Gastrocnemius medialis (tissue), 4 donors: ENCODE measurements at regions of chr4 and their contacts with region 1.

Region 1: DNA sequence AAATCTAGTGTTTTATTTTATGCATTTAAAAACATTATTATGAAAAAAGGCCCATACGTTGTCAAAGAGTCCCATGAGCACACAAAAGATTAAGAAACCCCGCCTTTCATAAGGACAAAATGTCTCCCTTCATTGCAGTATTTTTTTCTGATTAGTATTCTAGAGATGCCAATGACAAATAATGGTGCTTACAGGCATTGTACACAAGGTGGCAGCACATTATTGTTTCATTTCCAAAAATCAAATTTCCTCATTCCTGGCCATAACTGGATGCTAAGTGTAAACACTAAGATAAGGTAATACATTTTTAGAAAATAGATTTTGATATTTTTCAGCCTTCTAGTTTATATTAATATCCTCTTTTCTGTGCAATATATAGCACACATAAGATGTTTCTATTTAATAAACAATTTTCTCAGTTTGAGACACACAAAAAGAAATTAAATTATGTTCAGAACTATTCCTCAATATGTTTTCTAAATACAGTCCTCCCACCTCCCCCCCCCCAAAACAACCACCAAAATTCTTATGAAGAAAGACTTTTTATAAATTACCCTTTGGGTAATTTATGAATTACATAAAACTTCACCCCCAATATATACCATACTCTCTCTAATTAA is 47.7 kb downstream of the TIGD2 start:
- DNase-seq: no peak
- ATAC-seq: peak; percentile 33 to 36
- H3K4me3 ChIP-seq: no peak overlapping the region
- H3K27ac ChIP-seq: no peak overlapping the region
- H3K4me1 ChIP-seq: no peaks in the 10 kb centered on the region
- H3K27me3 ChIP-seq: no peaks in the 10 kb centered on the region
- CTCF ChIP-seq: peak; percentile 20 to 65 (median 34)
- POLR2A ChIP-seq: no peak

Region 2: GRCh38 chr4:88828842-88829571 is 330.0 kb before region 1 on chr4:
- in situ Hi-C with region 1: no loop called
- intact Hi-C with region 1: no loop called
- DNase-seq: no peak
- ATAC-seq: peak; percentile 53 to 57
- H3K4me3 ChIP-seq: no peak overlapping the region
- H3K27ac ChIP-seq: peak overlapping the region in 2 of 4 donors; percentile 37 to 50
- H3K4me1 ChIP-seq: peaks cover 3 to 6% of the 10 kb centered on the region in 2 donors
- H3K27me3 ChIP-seq: no peaks in the 10 kb centered on the region
- CTCF ChIP-seq: no peak
- POLR2A ChIP-seq: no peak

Region 3: DNA sequence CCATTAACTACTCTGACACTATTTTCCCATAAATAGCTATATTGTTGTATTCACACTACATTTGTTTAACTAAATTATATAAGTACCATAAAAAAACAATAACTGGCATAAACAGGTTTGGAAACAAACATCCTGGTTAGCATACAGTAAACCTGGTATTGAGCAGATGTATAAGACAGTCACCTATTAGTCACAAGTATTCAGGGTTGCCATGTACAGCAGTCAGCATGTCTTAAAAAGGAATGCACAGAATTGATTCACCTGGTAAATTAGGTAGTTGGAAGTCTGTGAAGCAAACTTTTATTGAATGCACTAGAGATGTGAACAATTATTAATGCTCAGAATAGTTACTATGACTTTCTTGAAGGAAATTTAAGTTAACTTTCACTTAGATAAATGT is 239.9 kb before region 1 on chr4:
- in situ Hi-C with region 1: no loop called
- intact Hi-C with region 1: no loop called
- DNase-seq: no peak
- ATAC-seq: no peak
- H3K4me3 ChIP-seq: no peak overlapping the region
- H3K27ac ChIP-seq: no peak overlapping the region
- H3K4me1 ChIP-seq: no peaks in the 10 kb centered on the region
- H3K27me3 ChIP-seq: no peaks in the 10 kb centered on the region
- CTCF ChIP-seq: no peak
- POLR2A ChIP-seq: no peak

Region 4: GRCh38 chr4:89226665-89227574 is 67.9 kb after region 1 on chr4:
- in situ Hi-C with region 1: no loop called
- intact Hi-C with region 1: no loop called
- DNase-seq: peak; percentile 15 to 45
- ATAC-seq: peak; percentile 66 to 84
- H3K4me3 ChIP-seq: no peak overlapping the region
- H3K27ac ChIP-seq: no peak overlapping the region
- H3K4me1 ChIP-seq: no peaks in the 10 kb centered on the region
- H3K27me3 ChIP-seq: no peaks in the 10 kb centered on the region
- CTCF ChIP-seq: peak in 3 of 5 experiments; percentile 50 to 57 (median 57)
- POLR2A ChIP-seq: no peak

Region 5: DNA sequence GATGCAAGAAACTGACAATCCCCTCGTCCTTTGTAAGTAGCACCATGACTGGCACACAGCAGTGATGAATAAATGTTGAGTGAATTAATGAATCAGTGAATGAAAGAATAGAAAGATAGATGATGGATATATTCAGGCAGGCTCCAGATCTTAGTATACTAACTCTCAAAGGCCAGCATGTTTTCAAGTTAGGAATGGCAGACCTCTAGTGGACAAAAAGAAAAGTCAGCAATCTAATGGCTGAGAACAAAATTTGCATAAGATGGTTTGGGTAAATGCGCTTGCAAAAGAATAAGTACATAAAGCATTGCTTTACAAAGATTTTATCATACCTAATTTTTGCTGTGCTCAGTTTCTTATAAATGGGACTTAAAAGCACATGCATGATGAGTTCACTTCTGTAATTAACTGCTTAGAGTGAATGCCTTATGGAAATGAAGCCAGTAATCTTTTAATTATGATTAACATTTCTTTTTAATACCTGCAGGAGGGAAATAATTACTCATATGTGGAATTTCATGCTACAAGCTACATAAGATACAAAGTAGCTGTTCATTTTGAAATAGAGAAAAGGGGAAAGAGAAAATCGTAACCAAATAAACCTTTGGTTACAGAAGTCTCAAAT is 275.5 kb after region 1 on chr4:
- in situ Hi-C with region 1: loop called in 1 of 4 experiments (anchors 10 kb)
- intact Hi-C with region 1: no loop called
- DNase-seq: no peak
- ATAC-seq: no peak
- H3K4me3 ChIP-seq: no peak overlapping the region
- H3K27ac ChIP-seq: no peak overlapping the region
- H3K4me1 ChIP-seq: no peaks in the 10 kb centered on the region
- H3K27me3 ChIP-seq: no peaks in the 10 kb centered on the region
- CTCF ChIP-seq: peak in 2 of 5 experiments; percentile 34 to 46
- POLR2A ChIP-seq: no peak